Ovary (tissue), 10 donors: ENCODE measurements at regions of chr17 and their contacts with region 1.

Region 1: GRCh38 chr17:34434052-34434451 is 71.0 kb upstream of the CCL1 start:
- DNase-seq: no peak
- H3K4me3 ChIP-seq: no peak overlapping the region
- H3K27ac ChIP-seq: no peak overlapping the region
- H3K4me1 ChIP-seq: no peaks in the 10 kb centered on the region
- H3K27me3 ChIP-seq: no peaks in the 10 kb centered on the region
- CTCF ChIP-seq: no peak
- EP300 ChIP-seq: no peak
- POLR2A ChIP-seq: no peak

Region 2: GRCh38 chr17:34499576-34499975 is 65.5 kb after region 1 on chr17:
- intact Hi-C with region 1: loop called in 1 of 4 experiments (anchors 10 kb)
- DNase-seq: no peak
- H3K4me3 ChIP-seq: no peak overlapping the region
- H3K27ac ChIP-seq: no peak overlapping the region
- H3K4me1 ChIP-seq: peaks cover 4% of the 10 kb centered on the region
- H3K27me3 ChIP-seq: no peaks in the 10 kb centered on the region
- CTCF ChIP-seq: no peak
- EP300 ChIP-seq: no peak
- POLR2A ChIP-seq: no peak